ENCODE measurements at regions of chr15 and their contacts with region 1.

Region 1: GRCh38 chr15:99059010-99059981 is 45.6 kb upstream of the SYNM start:
- DNase-seq: peak; percentile 49
- H3K4me3 ChIP-seq: peak overlapping the region; percentile 36 to 52
- H3K27ac ChIP-seq: peak overlapping the region; percentile 75 to 82
- H3K4me1 ChIP-seq: no peaks in the 10 kb centered on the region
- H3K27me3 ChIP-seq: no peaks in the 10 kb centered on the region
- CTCF ChIP-seq: peak; percentile 72 to 92 (median 88)
- POLR2A ChIP-seq: no peak

Region 2: DNA sequence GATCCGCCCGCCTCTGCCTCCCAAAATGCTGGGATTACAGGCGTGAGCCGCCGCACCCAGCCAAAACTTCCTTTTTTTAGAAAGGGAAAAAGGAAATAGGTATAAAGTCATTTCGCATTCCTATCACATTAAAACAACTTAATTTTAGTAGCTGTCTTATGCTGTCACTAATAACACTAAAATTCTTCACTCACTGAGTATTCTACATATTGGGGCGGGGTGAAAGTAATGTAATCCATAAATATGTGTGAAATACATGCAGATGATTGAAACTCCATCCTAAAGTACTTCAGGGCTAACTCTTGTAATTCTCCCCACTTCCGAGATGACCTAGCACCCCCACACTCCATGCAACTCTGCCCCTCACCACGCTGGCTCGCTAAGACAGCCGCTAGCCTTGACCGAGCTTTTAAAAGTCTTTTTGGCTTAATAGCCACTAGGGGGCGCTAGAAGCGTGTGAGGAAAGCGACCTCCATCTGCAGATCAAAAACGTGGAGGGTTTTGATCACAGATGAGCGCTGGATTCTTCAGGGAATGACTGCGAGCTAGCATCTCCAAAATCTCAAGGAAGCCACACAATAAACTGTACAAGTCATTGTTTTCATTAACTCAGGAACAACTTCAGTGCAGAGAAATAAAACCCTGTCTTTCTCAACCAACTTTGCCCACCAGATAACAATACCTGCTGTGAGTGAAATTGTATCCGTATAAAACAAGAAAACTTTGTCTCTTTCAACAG is 540.3 kb before region 1 on chr15:
- intact Hi-C with region 1: loop called (anchors 5 kb)
- DNase-seq: peak; percentile 65
- H3K4me3 ChIP-seq: no peak overlapping the region
- H3K27ac ChIP-seq: no peak overlapping the region
- H3K4me1 ChIP-seq: no peaks in the 10 kb centered on the region
- H3K27me3 ChIP-seq: no peaks in the 10 kb centered on the region
- CTCF ChIP-seq: peak; percentile 36 to 82 (median 80)
- POLR2A ChIP-seq: no peak

Region 3: GRCh38 chr15:98779463-98780071 is 279.7 kb before region 1 on chr15:
- intact Hi-C with region 1: loop called (anchors 5 kb)
- DNase-seq: peak; percentile 60
- H3K4me3 ChIP-seq: no peak overlapping the region
- H3K27ac ChIP-seq: peak overlapping the region; percentile 40 to 65
- H3K4me1 ChIP-seq: peaks cover 24% of the 10 kb centered on the region
- H3K27me3 ChIP-seq: no peaks in the 10 kb centered on the region
- CTCF ChIP-seq: peak; percentile 62 to 90 (median 76)
- POLR2A ChIP-seq: no peak

Region 4: DNA sequence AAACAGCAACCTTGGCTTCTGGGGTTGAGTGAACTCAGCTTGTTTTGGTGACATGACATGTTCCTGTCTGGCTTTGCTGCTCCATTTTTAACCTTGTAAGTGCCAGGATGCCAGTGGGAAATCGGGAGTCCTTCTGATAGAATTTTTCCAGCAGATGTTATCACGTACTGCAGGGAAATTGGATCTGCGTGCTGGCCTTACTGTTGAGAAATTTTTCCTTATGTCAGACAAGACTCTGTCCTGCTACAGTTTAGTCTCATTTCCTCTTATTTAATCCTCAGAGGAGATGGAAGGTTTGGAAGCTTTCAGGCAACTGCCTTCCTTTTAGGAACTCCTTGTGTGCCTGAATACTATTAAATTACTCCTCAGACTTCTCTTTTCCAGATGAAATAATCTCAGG is 132.3 kb before region 1 on chr15:
- intact Hi-C with region 1: loop called (anchors 10 kb)
- DNase-seq: no peak
- H3K4me3 ChIP-seq: no peak overlapping the region
- H3K27ac ChIP-seq: peak overlapping the region; percentile 50 to 53
- H3K4me1 ChIP-seq: peaks cover 6% of the 10 kb centered on the region
- H3K27me3 ChIP-seq: no peaks in the 10 kb centered on the region
- CTCF ChIP-seq: no peak
- POLR2A ChIP-seq: no peak

Region 5: DNA sequence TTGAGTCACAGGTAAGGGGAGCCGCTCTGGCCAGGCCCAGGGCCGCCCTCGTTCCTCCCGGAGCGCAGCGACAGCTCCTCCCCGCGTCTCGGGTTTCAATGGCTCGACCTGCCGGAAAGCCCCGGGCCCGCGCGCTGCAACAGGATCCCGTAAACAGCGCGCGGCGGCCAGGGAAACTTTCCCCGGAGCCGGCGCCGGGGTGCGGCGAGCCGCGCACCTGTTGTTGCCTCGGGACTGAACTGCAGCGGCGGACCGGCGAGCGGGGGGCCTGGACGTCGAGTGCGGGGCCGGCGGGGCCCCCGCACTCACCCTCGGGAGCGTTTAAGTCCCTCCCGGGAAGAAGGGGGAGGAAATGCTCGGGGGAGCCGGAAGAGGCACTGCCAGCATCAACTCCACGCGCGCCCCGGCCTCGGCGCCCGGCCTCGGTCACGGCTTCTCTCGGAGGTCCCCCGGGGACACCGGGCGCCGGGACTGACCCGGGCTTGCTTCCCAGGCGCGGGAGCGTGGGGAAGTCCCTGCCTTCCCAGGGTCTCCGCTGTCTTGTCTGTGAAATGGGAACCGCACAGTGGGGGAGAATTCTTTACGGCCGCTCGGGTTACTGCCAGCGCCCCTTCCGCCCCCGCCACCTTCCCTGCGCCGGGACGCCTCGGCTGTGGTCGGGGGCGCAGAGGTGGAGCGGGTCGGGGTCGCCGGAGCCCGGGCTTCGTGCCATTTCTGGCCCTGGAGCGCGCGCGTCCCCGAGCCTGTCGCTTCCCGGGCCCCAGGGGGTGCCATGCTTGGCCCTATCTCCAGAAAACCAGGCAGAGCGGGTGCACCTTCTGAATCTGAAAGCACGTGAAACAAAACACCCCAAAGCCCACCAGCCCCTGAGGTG is 44.3 kb before region 1 on chr15:
- intact Hi-C with region 1: loop called (anchors 5 kb)
- DNase-seq: peak; percentile 81
- H3K4me3 ChIP-seq: peak overlapping the region; percentile 49 to 55
- H3K27ac ChIP-seq: peak overlapping the region; percentile 80 to 85
- H3K4me1 ChIP-seq: no peaks in the 10 kb centered on the region
- H3K27me3 ChIP-seq: no peaks in the 10 kb centered on the region
- CTCF ChIP-seq: peak in 1 of 4 experiments; percentile 14
- POLR2A ChIP-seq: peak; percentile 74